ENCODE measurements at regions of chr4 and their contacts with region 1.

Region 1: DNA sequence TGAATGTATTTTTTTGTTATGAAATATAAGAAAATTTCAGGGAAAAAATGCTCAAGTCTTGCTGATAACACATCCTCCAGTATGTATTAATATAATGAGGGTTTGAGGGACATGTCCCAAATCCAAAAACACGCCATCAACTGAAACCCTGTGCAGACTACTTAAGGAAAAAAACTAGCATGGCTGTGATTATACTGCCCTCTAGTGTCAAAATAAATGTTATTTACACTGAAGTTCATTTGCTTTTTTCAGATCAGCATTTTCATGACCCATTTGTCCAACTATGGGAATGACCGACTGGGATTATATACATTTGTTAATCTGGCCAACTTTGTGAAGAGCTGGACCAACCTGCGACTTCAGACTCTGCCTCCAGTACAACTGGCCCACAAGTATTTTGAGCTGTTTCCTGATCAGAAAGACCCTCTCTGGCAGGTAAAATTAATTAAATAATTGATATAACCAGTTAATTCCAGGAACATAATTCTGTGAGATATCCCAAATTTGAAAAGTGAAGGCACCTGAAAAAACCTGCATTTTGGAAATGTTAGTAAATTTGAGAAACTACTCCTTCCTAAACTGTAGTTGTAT is 128.5 kb downstream of the PRSS12 start:
- DNase-seq: peak; percentile 78
- H3K4me3 ChIP-seq: no peak overlapping the region
- H3K27ac ChIP-seq: no peak overlapping the region
- H3K4me1 ChIP-seq: no peaks in the 10 kb centered on the region
- H3K27me3 ChIP-seq: no peaks in the 10 kb centered on the region
- CTCF ChIP-seq: peak; percentile 65

Region 2: GRCh38 chr4:118034053-118034785 is 190.1 kb before region 1 on chr4 and contains the start of gene NDST3:
- CTCF ChIA-PET with region 1: no interaction called
- POLR2A ChIA-PET with region 1: no interaction called
- intact Hi-C with region 1: loop called (anchors 5 kb)
- DNase-seq: peak; percentile 89
- H3K4me3 ChIP-seq: peak within 1 kb of the TSS; percentile 70
- H3K27ac ChIP-seq: no peak within 1 kb of the TSS
- H3K4me1 ChIP-seq: peaks cover 6% of the 10 kb centered on the region
- H3K27me3 ChIP-seq: no peaks in the 10 kb centered on the region
- CTCF ChIP-seq: peak; percentile 77
- total RNA-seq, gene NDST3: 2.6 and 3.0 TPM in 2 replicates

Region 3: GRCh38 chr4:118058955-118059354 is 165.4 kb before region 1 on chr4:
- CTCF ChIA-PET with region 1: no interaction called
- POLR2A ChIA-PET with region 1: no interaction called
- intact Hi-C with region 1: no loop called
- DNase-seq: no peak
- H3K4me3 ChIP-seq: no peak overlapping the region
- H3K27ac ChIP-seq: no peak overlapping the region
- H3K4me1 ChIP-seq: no peaks in the 10 kb centered on the region
- H3K27me3 ChIP-seq: no peaks in the 10 kb centered on the region
- CTCF ChIP-seq: no peak

Region 4: DNA sequence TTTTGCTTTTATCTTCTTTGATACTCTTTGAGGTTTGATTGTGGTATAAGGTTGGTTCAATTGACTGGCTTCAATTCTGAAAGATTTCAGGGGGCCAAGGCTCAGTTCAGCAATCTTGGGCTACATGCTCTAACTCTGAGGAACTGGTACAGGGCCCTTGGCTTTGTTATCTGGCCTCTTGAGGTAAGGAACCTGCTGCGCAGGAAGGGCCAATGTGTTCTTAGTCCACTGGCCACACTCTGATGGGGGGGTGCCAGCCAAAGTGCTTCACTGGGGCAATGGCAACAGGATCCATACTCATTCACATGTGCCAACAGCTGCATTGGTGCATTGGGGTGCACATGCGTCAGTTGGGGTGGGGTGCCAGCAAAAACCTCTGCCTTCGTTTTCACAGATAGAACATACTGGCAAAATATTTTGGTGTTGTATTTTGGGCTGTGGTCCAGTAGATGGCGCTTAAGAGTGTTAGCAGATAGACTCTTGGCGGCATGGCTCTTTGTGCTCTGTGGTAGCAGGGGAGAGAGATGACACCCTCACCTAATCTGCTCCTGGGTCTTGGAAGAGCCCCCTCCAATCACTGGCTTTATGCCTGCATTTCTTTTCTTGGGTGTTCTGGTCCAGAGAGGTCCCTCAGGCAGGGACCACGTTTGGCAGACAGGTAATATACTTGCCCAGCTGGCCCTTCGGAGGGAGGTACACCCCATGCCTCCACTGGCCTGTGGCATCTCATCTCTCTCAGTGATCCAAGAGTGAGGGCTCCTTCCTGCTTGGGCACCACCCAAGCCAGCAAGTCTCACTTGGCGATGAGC is 147.2 kb before region 1 on chr4:
- CTCF ChIA-PET with region 1: no interaction called
- POLR2A ChIA-PET with region 1: no interaction called
- intact Hi-C with region 1: loop called (anchors 2 kb)
- DNase-seq: peak; percentile 74
- H3K4me3 ChIP-seq: no peak overlapping the region
- H3K27ac ChIP-seq: no peak overlapping the region
- H3K4me1 ChIP-seq: peaks cover 10% of the 10 kb centered on the region
- H3K27me3 ChIP-seq: no peaks in the 10 kb centered on the region
- CTCF ChIP-seq: peak; percentile 64

Region 5: GRCh38 chr4:118087366-118087765 is 137.0 kb before region 1 on chr4:
- CTCF ChIA-PET with region 1: no interaction called
- POLR2A ChIA-PET with region 1: no interaction called
- intact Hi-C with region 1: no loop called
- DNase-seq: peak; percentile 7
- H3K4me3 ChIP-seq: no peak overlapping the region
- H3K27ac ChIP-seq: no peak overlapping the region
- H3K4me1 ChIP-seq: peaks cover 27% of the 10 kb centered on the region
- H3K27me3 ChIP-seq: peaks cover 3% of the 10 kb centered on the region
- CTCF ChIP-seq: no peak

Measured in A673 (cell line).